ENCODE measurements at regions of chr2 and their contacts with region 1.

Region 1: GRCh38 chr2:776488-776887 is 99.3 kb upstream of the TMEM18 start:
- DNase-seq: no peak
- ATAC-seq: peak in 1 of 4 donors; percentile 20
- H3K4me3 ChIP-seq: no peak overlapping the region
- H3K27ac ChIP-seq: no peak overlapping the region
- H3K4me1 ChIP-seq: no peaks in the 10 kb centered on the region
- H3K27me3 ChIP-seq: peaks cover 0 to 14% (median 0%) of the 10 kb centered on the region in 9 donors
- CTCF ChIP-seq: no peak
- POLR2A ChIP-seq: no peak

Region 2: GRCh38 chr2:854460-854859 is 78.0 kb after region 1 on chr2:
- intact Hi-C with region 1: no loop called
- DNase-seq: no peak
- ATAC-seq: no peak
- H3K4me3 ChIP-seq: no peak overlapping the region
- H3K27ac ChIP-seq: no peak overlapping the region
- H3K4me1 ChIP-seq: no peaks in the 10 kb centered on the region
- H3K27me3 ChIP-seq: no peaks in the 10 kb centered on the region
- CTCF ChIP-seq: peak; percentile 19 to 65 (median 50)
- POLR2A ChIP-seq: no peak

Region 3: GRCh38 chr2:1268034-1268433 is 491.5 kb after region 1 on chr2:
- intact Hi-C with region 1: loop called in 1 of 10 experiments (anchors 5 kb)
- DNase-seq: no peak
- ATAC-seq: no peak
- H3K4me3 ChIP-seq: no peak overlapping the region
- H3K27ac ChIP-seq: no peak overlapping the region
- H3K4me1 ChIP-seq: no peaks in the 10 kb centered on the region
- H3K27me3 ChIP-seq: peaks cover 0 to 4% (median 0%) of the 10 kb centered on the region in 9 donors
- CTCF ChIP-seq: no peak
- POLR2A ChIP-seq: no peak